GM10248 (cell line): ENCODE measurements at regions of chr12 and their contacts with region 1.

Region 1: GRCh38 chr12:128797119-128798118 is 26.3 kb downstream of the SLC15A4 start:
- DNase-seq: no peak
- CTCF ChIP-seq: no peak

Region 2: DNA sequence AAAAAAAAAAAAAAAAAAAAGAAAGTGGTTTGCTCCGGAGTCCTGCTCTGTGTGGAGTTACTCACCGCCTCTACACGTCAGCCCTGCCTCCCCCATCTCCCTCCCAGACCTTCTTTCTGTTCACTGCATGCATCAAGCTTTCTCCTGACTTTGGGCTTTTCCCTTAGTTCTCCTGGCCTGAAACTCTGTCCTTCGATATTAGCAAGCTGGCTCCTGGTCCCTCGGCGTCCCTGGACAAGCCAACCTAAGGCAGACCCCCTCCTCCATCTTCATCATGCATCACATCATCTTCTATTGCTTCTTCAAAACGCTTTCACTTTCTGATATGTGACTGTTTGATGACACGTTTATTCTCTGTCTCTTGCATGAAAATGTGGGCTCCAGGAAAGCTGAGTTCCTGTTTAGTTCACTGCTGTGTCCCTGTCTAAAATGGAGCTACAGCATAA is 14.3 kb before region 1 on chr12:
- CTCF ChIA-PET with region 1: interaction called, 28 read pairs
- POLR2A ChIA-PET with region 1: no interaction called
- DNase-seq: peak; percentile 62
- CTCF ChIP-seq: no peak

Region 3: DNA sequence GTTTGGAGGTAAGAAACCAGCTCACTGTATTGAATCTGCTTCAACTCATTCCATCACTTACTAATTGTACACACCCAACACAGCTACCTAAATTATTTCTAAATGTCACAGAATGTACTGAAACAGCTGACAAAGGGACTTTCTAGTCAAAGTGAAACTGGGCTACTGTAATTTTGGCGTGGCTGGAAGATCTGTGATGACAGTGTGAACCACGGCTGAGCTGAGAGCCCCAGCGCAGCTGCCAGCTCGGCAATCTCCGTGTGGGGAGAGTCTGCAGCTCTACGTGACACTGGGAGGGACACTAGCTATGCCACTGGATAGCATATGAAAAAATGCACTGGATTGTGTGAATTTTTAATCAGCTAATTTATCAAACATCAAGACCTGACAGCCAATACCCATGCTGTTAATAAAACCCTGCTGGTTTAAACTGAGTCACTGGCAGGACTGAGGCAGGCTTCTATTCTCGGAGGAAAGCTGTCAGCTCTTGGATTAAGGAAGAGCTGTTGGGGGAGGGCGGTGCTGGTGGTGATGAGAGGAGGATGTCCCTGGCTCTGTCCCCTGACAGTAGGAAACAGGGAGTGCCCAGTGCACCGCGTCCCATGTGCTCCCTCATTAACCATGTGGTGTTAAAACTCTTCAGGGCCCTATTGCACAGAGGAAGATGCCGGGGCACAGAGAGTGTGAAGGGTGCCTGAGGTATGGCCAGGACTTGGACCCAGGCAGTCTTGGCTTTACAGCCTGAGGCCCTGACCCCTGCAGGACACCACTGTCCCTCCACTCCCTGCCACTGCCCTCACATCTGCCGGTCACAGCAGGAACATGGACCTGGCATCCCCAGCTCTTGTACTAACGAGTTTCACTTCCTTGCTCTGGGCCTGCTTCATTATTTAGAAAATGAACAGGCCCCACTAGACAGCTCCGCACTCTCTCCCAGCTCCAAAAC is 13.0 kb after region 1 on chr12:
- CTCF ChIA-PET with region 1: interaction called, 71 read pairs
- POLR2A ChIA-PET with region 1: interaction called, 23 read pairs
- DNase-seq: peak; percentile 65
- CTCF ChIP-seq: no peak

Region 4: GRCh38 chr12:128820723-128821432 is 23.5 kb after region 1 on chr12:
- CTCF ChIA-PET with region 1: interaction called, 14 read pairs
- POLR2A ChIA-PET with region 1: interaction called, 23 read pairs
- DNase-seq: peak; percentile 78
- CTCF ChIP-seq: no peak

Region 5: GRCh38 chr12:128829861-128830504 is 32.6 kb after region 1 on chr12:
- CTCF ChIA-PET with region 1: interaction called, 10 read pairs
- POLR2A ChIA-PET with region 1: no interaction called
- DNase-seq: peak; percentile 78
- CTCF ChIP-seq: no peak

Region 6: DNA sequence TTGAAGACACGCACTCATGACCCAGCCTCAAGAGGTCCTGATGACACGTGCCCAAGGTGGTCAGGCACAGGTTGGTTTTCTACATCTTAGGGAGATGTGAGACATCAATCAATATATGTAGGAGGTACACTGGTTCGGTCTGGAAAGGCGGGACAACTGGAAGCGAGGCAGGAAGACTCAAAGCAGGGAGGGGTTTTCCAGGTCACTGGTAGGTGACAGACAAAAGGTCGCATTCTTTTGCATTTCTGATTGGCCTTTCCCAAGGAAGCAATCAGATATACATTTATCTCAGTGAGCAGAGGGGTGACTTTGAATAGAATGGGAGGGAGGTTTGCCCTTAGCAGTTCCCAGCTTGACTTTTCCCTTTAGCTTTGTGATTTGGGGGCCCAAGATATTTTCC is 94.4 kb after region 1 on chr12:
- CTCF ChIA-PET with region 1: no interaction called
- POLR2A ChIA-PET with region 1: no interaction called
- DNase-seq: no peak
- CTCF ChIP-seq: no peak